OCI-LY7 (cell line): ENCODE measurements at regions of chr6 and their contacts with region 1.

Region 1: GRCh38 chr6:139291813-139292619 is at the start of gene TXLNB:
- DNase-seq: peak; percentile 76
- H3K4me3 ChIP-seq: peak within 1 kb of the TSS; percentile 64
- H3K27ac ChIP-seq: peak within 1 kb of the TSS; percentile 97
- H3K4me1 ChIP-seq: peaks cover 77% of the 10 kb centered on the region
- CTCF ChIP-seq: no peak
- total RNA-seq, gene TXLNB: 7.3 and 7.9 TPM in 2 replicates

Region 2: GRCh38 chr6:139161817-139162284 is 130.2 kb before region 1 on chr6:
- CTCF ChIA-PET with region 1: no interaction called
- POLR2A ChIA-PET with region 1: no interaction called
- intact Hi-C with region 1: no loop called
- DNase-seq: peak; percentile 71
- H3K4me3 ChIP-seq: no peak overlapping the region
- H3K27ac ChIP-seq: peak overlapping the region; percentile 55
- H3K4me1 ChIP-seq: peaks cover 53% of the 10 kb centered on the region
- CTCF ChIP-seq: no peak

Region 3: GRCh38 chr6:139262519-139263300 is 29.3 kb before region 1 on chr6:
- CTCF ChIA-PET with region 1: interaction called, 5 read pairs
- POLR2A ChIA-PET with region 1: interaction called, 42 read pairs
- intact Hi-C with region 1: no loop called
- DNase-seq: peak; percentile 78
- H3K4me3 ChIP-seq: peak overlapping the region; percentile 50
- H3K27ac ChIP-seq: peak overlapping the region; percentile 88
- H3K4me1 ChIP-seq: peaks cover 63% of the 10 kb centered on the region
- CTCF ChIP-seq: no peak

Region 4: DNA sequence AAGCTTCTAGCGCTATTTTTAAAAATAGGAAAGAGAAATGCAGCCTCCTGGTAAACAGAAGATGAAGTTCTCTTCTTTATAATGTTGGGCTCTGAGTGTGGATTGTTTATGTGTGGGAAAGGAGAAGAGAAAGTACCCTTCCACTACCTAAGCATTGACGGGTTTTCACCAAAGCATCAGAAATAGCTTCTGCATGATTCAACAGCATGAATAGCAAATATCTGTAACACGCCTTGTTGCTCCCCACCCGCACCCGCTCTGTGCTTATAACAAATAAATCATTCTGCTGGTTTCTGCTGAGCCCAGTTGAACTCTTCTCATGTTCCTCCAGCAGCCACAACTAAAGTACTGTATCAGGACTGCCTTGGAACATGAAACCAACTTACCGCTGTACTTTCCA is 21.0 kb before region 1 on chr6:
- CTCF ChIA-PET with region 1: interaction called, 5 read pairs
- POLR2A ChIA-PET with region 1: interaction called, 42 read pairs
- intact Hi-C with region 1: no loop called
- DNase-seq: peak; percentile 80
- H3K4me3 ChIP-seq: peak overlapping the region; percentile 63
- H3K27ac ChIP-seq: peak overlapping the region; percentile 89
- H3K4me1 ChIP-seq: peaks cover 89% of the 10 kb centered on the region
- CTCF ChIP-seq: no peak

Region 5: DNA sequence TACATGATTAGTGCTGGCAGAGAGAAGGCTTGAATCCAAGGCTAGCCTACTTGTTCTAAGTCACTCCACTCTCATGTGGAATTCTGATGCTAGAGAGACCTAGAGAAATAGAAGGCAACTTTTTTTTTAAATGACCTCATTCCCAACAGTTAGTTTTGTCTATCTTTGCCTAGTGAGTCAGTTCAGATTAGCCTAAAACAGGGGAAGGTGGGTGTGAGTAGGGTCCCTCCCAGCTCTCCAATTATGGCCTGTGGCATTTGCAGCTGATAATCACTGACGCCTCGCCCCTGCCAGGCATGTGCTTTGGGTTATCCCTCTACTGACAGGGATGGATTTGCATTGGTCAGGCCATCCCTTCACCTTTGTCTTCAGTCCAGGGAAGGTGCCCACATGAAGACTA is 13.8 kb before region 1 on chr6:
- CTCF ChIA-PET with region 1: interaction called, 5 read pairs
- POLR2A ChIA-PET with region 1: interaction called, 19 read pairs
- intact Hi-C with region 1: loop called (anchors 1 kb)
- DNase-seq: no peak
- H3K4me3 ChIP-seq: no peak overlapping the region
- H3K27ac ChIP-seq: peak overlapping the region; percentile 89
- H3K4me1 ChIP-seq: peaks cover 89% of the 10 kb centered on the region
- CTCF ChIP-seq: no peak

Region 6: GRCh38 chr6:139303185-139303584 is 11.2 kb after region 1 on chr6:
- CTCF ChIA-PET with region 1: interaction called, 4 read pairs
- POLR2A ChIA-PET with region 1: interaction called, 13 read pairs
- intact Hi-C with region 1: no loop called
- DNase-seq: no peak
- H3K4me3 ChIP-seq: no peak overlapping the region
- H3K27ac ChIP-seq: no peak overlapping the region
- H3K4me1 ChIP-seq: no peaks in the 10 kb centered on the region
- CTCF ChIP-seq: no peak

Region 7: GRCh38 chr6:139323511-139324300 is 31.7 kb after region 1 on chr6:
- CTCF ChIA-PET with region 1: no interaction called
- POLR2A ChIA-PET with region 1: interaction called, 36 read pairs
- intact Hi-C with region 1: loop called (anchors 1 kb)
- DNase-seq: peak; percentile 90
- H3K4me3 ChIP-seq: peak overlapping the region; percentile 61
- H3K27ac ChIP-seq: peak overlapping the region; percentile 97
- H3K4me1 ChIP-seq: peaks cover 78% of the 10 kb centered on the region
- CTCF ChIP-seq: no peak

Region 8: GRCh38 chr6:139334806-139335446 is 42.9 kb after region 1 on chr6:
- CTCF ChIA-PET with region 1: no interaction called
- POLR2A ChIA-PET with region 1: interaction called, 18 read pairs
- intact Hi-C with region 1: no loop called
- DNase-seq: no peak
- H3K4me3 ChIP-seq: peak overlapping the region; percentile 26
- H3K27ac ChIP-seq: no peak overlapping the region
- H3K4me1 ChIP-seq: peaks cover 43% of the 10 kb centered on the region
- CTCF ChIP-seq: no peak

Region 9: DNA sequence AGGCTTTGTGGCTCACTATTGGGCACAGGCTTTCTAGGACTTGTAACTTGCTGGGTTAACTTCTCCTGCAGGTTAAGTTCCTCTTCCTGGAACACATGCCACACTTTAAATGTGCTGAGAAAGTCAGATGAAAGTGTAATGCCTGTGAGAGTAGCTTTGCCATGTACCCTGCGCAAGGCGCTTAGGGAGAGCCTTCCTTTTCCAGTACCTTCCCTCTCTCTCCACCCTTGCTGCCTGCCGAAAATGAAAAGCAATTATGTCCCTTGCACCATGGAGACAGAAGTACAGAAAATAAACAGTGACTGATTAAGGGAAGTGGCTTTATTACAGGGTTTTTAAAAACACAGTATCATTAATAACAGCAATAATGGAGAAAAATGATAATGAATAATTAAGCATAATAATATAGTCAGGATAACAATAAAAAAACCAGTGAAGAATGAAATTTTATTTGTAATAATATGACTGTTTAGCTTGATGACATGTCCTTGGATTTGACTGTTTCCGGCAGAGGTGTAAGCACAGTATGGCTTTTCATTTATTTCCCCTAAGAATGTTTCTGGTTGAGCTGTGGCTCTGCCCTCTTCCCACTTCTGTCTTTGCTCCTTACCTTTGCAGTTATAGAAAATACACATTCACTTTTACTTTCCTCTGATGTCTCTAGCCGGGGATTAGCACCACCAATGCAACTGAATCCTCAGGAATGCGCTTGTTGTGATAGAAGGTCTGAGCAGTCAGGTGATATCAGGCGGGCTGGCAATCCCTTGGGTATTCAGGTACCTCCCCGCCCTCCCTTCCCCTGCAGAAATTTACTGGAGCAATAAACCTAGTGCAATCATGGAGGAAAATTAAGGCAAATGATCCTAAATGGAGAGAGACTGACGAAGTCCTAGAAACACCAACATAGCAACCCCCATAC is 554.8 kb after region 1 on chr6:
- CTCF ChIA-PET with region 1: no interaction called
- POLR2A ChIA-PET with region 1: no interaction called
- intact Hi-C with region 1: no loop called
- DNase-seq: no peak
- H3K4me3 ChIP-seq: no peak overlapping the region
- H3K27ac ChIP-seq: no peak overlapping the region
- H3K4me1 ChIP-seq: peaks cover 5% of the 10 kb centered on the region
- CTCF ChIP-seq: no peak